ENCODE measurements at regions of chr4 and their contacts with region 1.

Region 1: GRCh38 chr4:1351854-1352633 is 5.0 kb downstream of the UVSSA start:
- DNase-seq: peak; percentile 87
- H3K4me3 ChIP-seq: no peak overlapping the region
- H3K27ac ChIP-seq: no peak overlapping the region
- H3K4me1 ChIP-seq: peaks cover 8 to 16% of the 10 kb centered on the region in 2 donors
- H3K27me3 ChIP-seq: no peaks in the 10 kb centered on the region
- CTCF ChIP-seq: peak; percentile 82 to 95 (median 88)
- POLR2A ChIP-seq: no peak

Region 2: GRCh38 chr4:1130316-1131186 is 221.5 kb before region 1 on chr4:
- intact Hi-C with region 1: loop called (anchors 5 kb)
- DNase-seq: peak; percentile 56 to 75
- H3K4me3 ChIP-seq: no peak overlapping the region
- H3K27ac ChIP-seq: no peak overlapping the region
- H3K4me1 ChIP-seq: peaks cover 0 to 7% of the 10 kb centered on the region in 2 donors
- H3K27me3 ChIP-seq: no peaks in the 10 kb centered on the region
- CTCF ChIP-seq: peak; percentile 95 to 99 (median 98)
- POLR2A ChIP-seq: no peak

Region 3: DNA sequence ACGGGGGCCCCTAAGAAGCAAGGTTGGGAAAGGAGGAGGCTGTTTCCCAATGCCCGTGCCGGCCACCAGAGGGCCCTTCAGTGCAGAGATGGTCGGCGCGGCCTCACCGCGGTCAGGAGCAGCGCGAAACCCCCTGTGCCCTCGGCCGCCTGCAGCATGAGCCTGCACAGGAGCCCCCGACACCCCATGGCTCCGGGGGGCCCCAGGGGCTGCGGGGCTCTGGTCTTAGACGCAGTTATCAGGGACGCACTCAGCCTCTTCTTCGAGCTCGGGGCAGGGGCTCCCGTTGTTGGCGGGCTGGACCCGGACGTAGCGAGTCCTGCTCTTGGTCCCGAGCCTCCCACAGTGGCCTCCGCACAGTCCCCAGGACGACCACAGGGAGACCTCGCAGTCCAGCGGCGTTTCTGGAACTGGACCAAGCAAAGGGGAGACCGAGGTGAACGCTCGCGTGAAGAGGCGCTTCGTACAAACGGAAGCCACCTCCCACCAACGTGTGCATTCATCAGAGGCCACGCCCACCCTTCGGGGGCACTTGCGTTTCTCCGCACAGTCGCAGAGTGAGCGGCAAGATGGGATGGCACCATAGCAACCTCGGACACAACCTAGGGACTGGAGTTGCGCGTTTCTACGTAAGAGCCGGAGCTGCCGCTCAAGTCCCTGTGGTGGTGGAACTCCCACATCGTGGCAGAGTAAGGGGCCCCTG is 184.6 kb before region 1 on chr4:
- intact Hi-C with region 1: loop called (anchors 10 kb)
- DNase-seq: peak; percentile 71 to 74
- H3K4me3 ChIP-seq: peak overlapping the region; percentile 34 to 54 (median 42)
- H3K27ac ChIP-seq: no peak overlapping the region
- H3K4me1 ChIP-seq: peaks cover 19 to 29% of the 10 kb centered on the region in 2 donors
- H3K27me3 ChIP-seq: peaks cover 15% of the 10 kb centered on the region
- CTCF ChIP-seq: peak; percentile 75 to 94 (median 85)
- POLR2A ChIP-seq: no peak

Region 4: GRCh38 chr4:1628892-1629698 is 277.1 kb after region 1 on chr4:
- intact Hi-C with region 1: loop called (anchors 5 kb)
- DNase-seq: peak; percentile 51 to 57
- H3K4me3 ChIP-seq: no peak overlapping the region
- H3K27ac ChIP-seq: no peak overlapping the region
- H3K4me1 ChIP-seq: no peaks in the 10 kb centered on the region
- H3K27me3 ChIP-seq: no peaks in the 10 kb centered on the region
- CTCF ChIP-seq: peak; percentile 77 to 99 (median 94)
- POLR2A ChIP-seq: no peak

Region 5: DNA sequence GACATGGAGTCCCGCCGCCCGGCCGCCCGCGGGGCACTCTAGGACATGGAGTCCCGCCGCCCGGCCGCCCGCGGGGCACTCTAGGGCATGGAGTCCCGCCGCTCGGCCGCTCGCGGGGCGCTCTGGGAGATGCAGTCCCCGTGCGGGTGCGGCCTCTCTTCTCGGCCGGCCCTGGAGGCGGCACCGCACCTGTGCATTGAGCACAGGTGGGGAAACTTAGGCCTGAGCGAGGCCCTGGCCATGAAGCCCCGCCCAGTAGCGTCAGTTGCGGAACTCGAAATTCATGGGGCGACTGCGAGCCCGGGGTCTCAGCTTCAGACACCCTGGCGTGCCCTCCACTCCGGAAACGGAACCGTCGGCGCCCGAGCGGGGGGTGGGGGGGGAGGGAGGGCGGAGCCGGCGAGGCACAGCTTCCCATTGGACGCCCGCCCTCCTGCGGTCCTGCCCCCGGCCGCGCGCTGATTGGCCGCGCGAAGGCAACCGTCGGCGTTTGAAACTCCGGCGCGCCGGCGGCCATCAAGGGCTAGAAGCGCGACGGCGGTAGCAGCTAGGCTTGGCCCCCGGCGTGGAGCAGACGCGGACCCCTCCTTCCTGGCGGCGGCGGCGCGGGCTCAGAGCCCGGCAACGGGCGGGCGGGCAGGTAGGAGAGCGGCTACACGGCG is 369.1 kb after region 1 on chr4 and contains the starts of genes TACC3 and TMEM129:
- intact Hi-C with region 1: loop called (anchors 10 kb)
- DNase-seq: peak; percentile 98
- H3K4me3 ChIP-seq: peak within 1 kb of the TSS; percentile 21 to 72 (median 63)
- H3K27ac ChIP-seq: peak within 1 kb of the TSS; percentile 72 to 93 (median 88)
- H3K4me1 ChIP-seq: peaks cover 13 to 25% of the 10 kb centered on the region in 2 donors
- H3K27me3 ChIP-seq: no peaks in the 10 kb centered on the region
- CTCF ChIP-seq: peak in 1 of 6 experiments; percentile 14
- POLR2A ChIP-seq: peak in 1 of 2 donors; percentile 89
- total RNA-seq, gene TACC3: 4.8 to 10.3 (median 5.1) TPM
- total RNA-seq, gene TMEM129: 64.8 to 138 (median 106) TPM

Measured in thyroid gland (tissue), 4 donors.